H1 (cell line): ENCODE measurements at regions of chr2 and their contacts with region 1.

Region 1: GRCh38 chr2:11320698-11321492 is 23.5 kb downstream of the ROCK2 start:
- DNase-seq: no peak
- H3K4me3 ChIP-seq: no peak overlapping the region
- H3K27ac ChIP-seq: no peak overlapping the region
- H3K4me1 ChIP-seq: no peaks in the 10 kb centered on the region
- H3K27me3 ChIP-seq: no peaks in the 10 kb centered on the region
- CTCF ChIP-seq: peak in 1 of 3 experiments; percentile 25; a peak in 1 of 4 replicates
- EP300 ChIP-seq: no peak
- POLR2A ChIP-seq: no peak
- RAD21 ChIP-seq: peak in 1 of 2 experiments; percentile 28; a peak in 1 of 4 replicates

Region 2: DNA sequence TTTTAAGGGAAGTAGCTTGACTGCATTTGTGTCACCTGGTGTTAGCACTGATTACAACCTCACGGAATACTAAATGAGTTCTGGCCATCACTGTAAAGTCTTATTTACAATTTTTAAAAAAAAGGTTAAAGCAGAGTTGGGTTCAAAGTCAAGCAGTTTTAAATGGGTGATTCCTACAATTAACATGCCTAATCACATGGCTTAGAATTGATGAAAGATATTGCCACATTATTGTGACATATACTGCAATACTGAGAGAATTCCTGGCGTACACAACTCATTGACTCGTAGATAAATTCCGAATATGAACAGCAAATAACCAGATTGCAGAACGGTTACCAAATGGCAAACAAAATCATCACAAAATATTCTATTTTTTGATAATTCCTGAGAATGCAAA is 10.7 kb before region 1 on chr2:
- CTCF ChIA-PET with region 1: interaction called, 14 read pairs
- POLR2A ChIA-PET with region 1: no interaction called
- DNase-seq: no peak
- H3K4me3 ChIP-seq: no peak overlapping the region
- H3K27ac ChIP-seq: no peak overlapping the region
- H3K4me1 ChIP-seq: no peaks in the 10 kb centered on the region
- H3K27me3 ChIP-seq: no peaks in the 10 kb centered on the region
- CTCF ChIP-seq: no peak
- EP300 ChIP-seq: no peak
- POLR2A ChIP-seq: no peak
- RAD21 ChIP-seq: no peak